ENCODE measurements at regions of chr5 and their contacts with region 1.

Region 1: DNA sequence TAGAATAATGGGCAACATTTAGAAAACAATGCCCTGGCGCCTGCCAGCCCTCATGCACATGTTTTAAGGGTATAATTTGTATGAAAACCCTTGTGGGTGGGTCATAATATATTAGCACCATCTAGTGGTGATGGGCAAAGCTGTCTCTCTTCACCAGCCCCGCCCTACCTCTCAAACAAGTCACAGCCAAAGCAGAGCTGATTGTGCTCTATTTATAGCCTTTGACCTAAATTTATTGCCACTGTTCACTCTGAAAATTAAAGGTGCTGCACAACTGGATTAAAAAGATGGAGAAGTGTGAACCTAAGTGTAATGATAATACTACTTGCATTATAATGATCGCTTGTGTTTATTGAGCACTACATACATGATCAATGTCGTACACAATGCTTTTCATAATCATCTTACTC is 131.9 kb upstream of the ANKH start:
- DNase-seq: peak in 34 of 35 experiments; percentile 13 to 81 (median 46)
- ATAC-seq: peak; percentile 92 to 96 (median 94)
- H3K4me3 ChIP-seq: no peak overlapping the region
- H3K4me3 Mint-ChIP-seq: no peak overlapping the region
- H3K27ac ChIP-seq: no peak overlapping the region
- H3K27ac Mint-ChIP-seq: no peak overlapping the region
- H3K4me1 ChIP-seq: no peaks in the 10 kb centered on the region
- H3K4me1 Mint-ChIP-seq: peaks cover 0 to 4% (median 0%) of the 10 kb centered on the region in 3 donors
- H3K27me3 ChIP-seq: peaks cover 0 to 1% of the 10 kb centered on the region in 2 experiments
- H3K27me3 Mint-ChIP-seq: peaks cover 0 to 5% of the 10 kb centered on the region in 2 donors

Region 2: DNA sequence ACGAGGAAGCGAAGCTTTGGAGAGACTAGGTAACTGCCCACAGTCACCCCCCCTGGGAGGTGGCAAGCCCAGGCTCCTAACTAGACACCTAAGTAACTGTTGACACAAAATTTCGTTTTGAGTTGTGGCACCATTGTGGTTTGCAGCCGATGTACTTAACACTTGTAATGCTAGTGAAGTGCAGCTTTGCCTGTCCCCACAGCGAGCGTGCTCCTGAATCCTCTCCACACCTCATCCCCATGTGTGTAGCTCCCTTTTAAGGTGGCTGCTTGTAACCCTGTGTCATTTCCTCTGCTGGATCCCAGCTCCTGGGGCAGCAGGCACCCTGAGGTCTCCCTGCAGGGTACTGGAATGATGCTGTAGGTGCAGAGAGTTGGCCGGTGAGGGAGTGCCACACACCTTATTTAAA is 745.5 kb before region 1 on chr5:
- CTCF ChIA-PET with region 1: interaction called in 1 of 2 experiments, 14 read pairs
- POLR2A ChIA-PET with region 1: no interaction called
- DNase-seq: no peak
- ATAC-seq: no peak
- H3K4me3 ChIP-seq: no peak overlapping the region
- H3K4me3 Mint-ChIP-seq: no peak overlapping the region
- H3K27ac ChIP-seq: no peak overlapping the region
- H3K27ac Mint-ChIP-seq: no peak overlapping the region
- H3K4me1 ChIP-seq: peaks cover 2 to 5% of the 10 kb centered on the region in 2 experiments
- H3K4me1 Mint-ChIP-seq: no peaks in the 10 kb centered on the region
- H3K27me3 ChIP-seq: peaks cover 0 to 22% of the 10 kb centered on the region in 2 experiments
- H3K27me3 Mint-ChIP-seq: peaks cover 0 to 7% of the 10 kb centered on the region in 2 donors

Region 3: GRCh38 chr5:14727428-14727865 is 276.1 kb before region 1 on chr5:
- CTCF ChIA-PET with region 1: interaction called, 7 to 26 read pairs
- POLR2A ChIA-PET with region 1: no interaction called
- DNase-seq: peak; percentile 22 to 84 (median 65)
- ATAC-seq: peak; percentile 69 to 73 (median 70)
- H3K4me3 ChIP-seq: no peak overlapping the region
- H3K4me3 Mint-ChIP-seq: no peak overlapping the region
- H3K27ac ChIP-seq: peak overlapping the region; percentile 1
- H3K27ac Mint-ChIP-seq: peak overlapping the region; percentile 52 to 59
- H3K4me1 ChIP-seq: no peaks in the 10 kb centered on the region
- H3K4me1 Mint-ChIP-seq: peaks cover 0 to 20% (median 17%) of the 10 kb centered on the region in 3 donors
- H3K27me3 ChIP-seq: no peaks in the 10 kb centered on the region
- H3K27me3 Mint-ChIP-seq: no peaks in the 10 kb centered on the region

Region 4: GRCh38 chr5:14922456-14922855 is 81.1 kb before region 1 on chr5:
- CTCF ChIA-PET with region 1: no interaction called
- POLR2A ChIA-PET with region 1: no interaction called
- DNase-seq: no peak
- ATAC-seq: no peak
- H3K4me3 ChIP-seq: no peak overlapping the region
- H3K4me3 Mint-ChIP-seq: no peak overlapping the region
- H3K27ac ChIP-seq: no peak overlapping the region
- H3K27ac Mint-ChIP-seq: no peak overlapping the region
- H3K4me1 ChIP-seq: peaks cover 13 to 15% of the 10 kb centered on the region in 2 experiments
- H3K4me1 Mint-ChIP-seq: peaks cover 16 to 31% (median 28%) of the 10 kb centered on the region in 3 donors
- H3K27me3 ChIP-seq: no peaks in the 10 kb centered on the region
- H3K27me3 Mint-ChIP-seq: no peaks in the 10 kb centered on the region

Region 5: GRCh38 chr5:14946815-14947640 is 56.5 kb before region 1 on chr5:
- CTCF ChIA-PET with region 1: interaction called, 12 read pairs
- POLR2A ChIA-PET with region 1: no interaction called
- DNase-seq: peak in 29 of 35 experiments; percentile 4 to 76 (median 30)
- ATAC-seq: peak; percentile 87 to 95 (median 93)
- H3K4me3 ChIP-seq: no peak overlapping the region
- H3K4me3 Mint-ChIP-seq: no peak overlapping the region
- H3K27ac ChIP-seq: no peak overlapping the region
- H3K27ac Mint-ChIP-seq: no peak overlapping the region
- H3K4me1 ChIP-seq: no peaks in the 10 kb centered on the region
- H3K4me1 Mint-ChIP-seq: peaks cover 5 to 7% (median 6%) of the 10 kb centered on the region in 3 donors
- H3K27me3 ChIP-seq: no peaks in the 10 kb centered on the region
- H3K27me3 Mint-ChIP-seq: peaks cover 0 to 4% of the 10 kb centered on the region in 2 donors

Region 6: DNA sequence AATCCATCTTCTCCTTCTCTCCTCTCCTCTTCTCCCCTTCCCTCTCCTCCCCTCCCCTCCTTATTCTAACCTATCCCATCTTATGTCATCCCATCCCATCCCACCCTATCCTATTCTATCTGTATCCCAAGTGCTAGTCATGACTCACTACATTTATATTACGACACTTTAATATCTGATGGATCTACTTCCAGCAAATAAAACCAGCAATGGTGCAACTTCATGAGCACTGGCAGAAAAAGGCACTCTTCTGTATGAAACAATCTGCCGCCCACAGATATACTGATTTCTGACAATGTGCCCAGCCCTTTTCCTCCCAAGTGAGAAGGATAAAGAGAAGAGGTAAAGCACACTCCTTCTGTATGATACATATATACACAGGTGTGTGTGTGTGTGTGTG is 45.3 kb before region 1 on chr5:
- CTCF ChIA-PET with region 1: interaction called, 14 to 22 read pairs
- POLR2A ChIA-PET with region 1: no interaction called
- DNase-seq: no peak
- ATAC-seq: no peak
- H3K4me3 ChIP-seq: no peak overlapping the region
- H3K4me3 Mint-ChIP-seq: no peak overlapping the region
- H3K27ac ChIP-seq: no peak overlapping the region
- H3K27ac Mint-ChIP-seq: no peak overlapping the region
- H3K4me1 ChIP-seq: no peaks in the 10 kb centered on the region
- H3K4me1 Mint-ChIP-seq: no peaks in the 10 kb centered on the region
- H3K27me3 ChIP-seq: peaks cover 0 to 4% of the 10 kb centered on the region in 2 experiments
- H3K27me3 Mint-ChIP-seq: peaks cover 3 to 4% of the 10 kb centered on the region in 2 donors

Region 7: DNA sequence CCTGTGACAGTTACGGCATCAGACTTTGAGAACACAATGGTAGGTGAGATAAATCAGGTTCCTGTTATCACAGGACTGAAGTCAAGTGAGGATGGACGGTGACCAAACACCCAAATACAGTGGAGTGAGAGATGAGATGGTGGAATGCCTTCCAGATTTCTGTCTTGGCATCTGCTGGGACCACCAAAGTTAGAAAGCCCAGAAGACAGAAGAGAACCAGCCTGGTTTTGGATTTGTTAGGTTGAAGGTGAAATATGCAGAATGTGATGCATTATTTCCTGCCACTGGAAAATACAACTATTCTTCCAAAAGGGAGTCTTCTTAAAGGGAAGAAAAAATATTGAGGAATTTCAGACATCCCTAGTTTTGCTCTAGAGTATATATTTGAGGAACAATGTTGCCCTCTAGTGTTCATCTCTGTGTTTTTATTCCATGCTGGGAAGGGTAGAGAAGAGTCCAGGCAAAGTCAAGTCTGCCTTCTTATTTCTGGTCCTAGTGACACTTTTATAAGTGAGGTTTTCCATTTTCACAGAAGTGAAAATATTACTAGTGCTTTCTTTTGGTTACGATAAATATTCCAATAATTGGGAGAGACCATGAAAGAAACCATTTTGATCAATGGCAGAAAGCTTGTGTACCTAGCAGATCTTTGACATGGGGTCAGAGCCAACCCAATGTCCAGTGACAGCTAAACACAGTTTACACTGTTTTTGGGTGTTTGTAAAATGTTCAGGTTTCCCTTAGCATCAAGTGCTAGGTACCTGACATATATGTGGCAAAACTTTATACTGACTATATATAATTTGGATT is 10.3 kb after region 1 on chr5:
- CTCF ChIA-PET with region 1: interaction called, 5 to 8 read pairs
- POLR2A ChIA-PET with region 1: interaction called in 1 of 2 experiments, 18 read pairs
- DNase-seq: peak in 1 of 35 experiments; percentile 59
- ATAC-seq: peak in 3 of 4 experiments; percentile 48 to 60 (median 59)
- H3K4me3 ChIP-seq: no peak overlapping the region
- H3K4me3 Mint-ChIP-seq: no peak overlapping the region
- H3K27ac ChIP-seq: no peak overlapping the region
- H3K27ac Mint-ChIP-seq: no peak overlapping the region
- H3K4me1 ChIP-seq: no peaks in the 10 kb centered on the region
- H3K4me1 Mint-ChIP-seq: no peaks in the 10 kb centered on the region
- H3K27me3 ChIP-seq: no peaks in the 10 kb centered on the region
- H3K27me3 Mint-ChIP-seq: peaks cover 0 to 3% of the 10 kb centered on the region in 2 donors

Region 8: GRCh38 chr5:15026011-15026893 is 22.7 kb after region 1 on chr5:
- CTCF ChIA-PET with region 1: no interaction called
- POLR2A ChIA-PET with region 1: no interaction called
- DNase-seq: no peak
- ATAC-seq: no peak
- H3K4me3 ChIP-seq: no peak overlapping the region
- H3K4me3 Mint-ChIP-seq: no peak overlapping the region
- H3K27ac ChIP-seq: no peak overlapping the region
- H3K27ac Mint-ChIP-seq: no peak overlapping the region
- H3K4me1 ChIP-seq: no peaks in the 10 kb centered on the region
- H3K4me1 Mint-ChIP-seq: no peaks in the 10 kb centered on the region
- H3K27me3 ChIP-seq: peaks cover 3 to 8% of the 10 kb centered on the region in 2 experiments
- H3K27me3 Mint-ChIP-seq: peaks cover 35 to 39% of the 10 kb centered on the region in 2 donors

Region 9: DNA sequence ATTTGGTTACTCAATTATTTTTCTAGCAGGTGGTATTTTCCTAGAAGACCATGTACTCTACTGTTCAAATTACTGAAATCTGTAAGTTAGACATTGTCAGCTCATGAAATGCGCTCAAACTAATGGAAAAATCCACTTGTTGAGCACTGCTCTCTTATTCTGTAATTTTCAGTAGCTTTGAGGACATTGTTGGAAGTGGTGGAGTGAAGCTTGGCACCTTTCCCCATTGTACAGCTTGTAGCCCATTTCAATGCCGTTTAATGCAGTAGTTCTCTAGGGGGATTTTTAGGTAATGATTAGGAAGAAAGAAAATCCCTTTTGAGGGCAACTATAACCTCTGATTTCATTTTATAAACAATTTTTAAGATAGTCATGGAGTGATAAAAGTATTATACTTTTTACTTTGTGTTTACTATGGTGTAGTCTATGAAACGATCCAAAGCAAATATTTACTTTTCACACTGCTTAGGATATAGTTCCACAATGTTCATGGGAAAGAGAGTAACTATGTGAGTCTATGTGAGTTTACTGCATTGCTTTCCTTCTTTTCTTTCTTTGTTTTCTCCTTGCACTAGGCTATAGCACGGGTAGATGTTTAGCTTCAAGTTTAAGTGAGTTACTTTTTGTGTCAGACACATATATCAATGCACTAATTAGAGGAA is 33.9 kb after region 1 on chr5:
- CTCF ChIA-PET with region 1: no interaction called
- POLR2A ChIA-PET with region 1: no interaction called
- DNase-seq: no peak
- ATAC-seq: no peak
- H3K4me3 ChIP-seq: no peak overlapping the region
- H3K4me3 Mint-ChIP-seq: no peak overlapping the region
- H3K27ac ChIP-seq: no peak overlapping the region
- H3K27ac Mint-ChIP-seq: no peak overlapping the region
- H3K4me1 ChIP-seq: no peaks in the 10 kb centered on the region
- H3K4me1 Mint-ChIP-seq: no peaks in the 10 kb centered on the region
- H3K27me3 ChIP-seq: peaks cover 0 to 2% of the 10 kb centered on the region in 2 experiments
- H3K27me3 Mint-ChIP-seq: peaks cover 11 to 21% of the 10 kb centered on the region in 2 donors

Region 10: GRCh38 chr5:15160091-15160490 is 156.6 kb after region 1 on chr5:
- CTCF ChIA-PET with region 1: no interaction called
- POLR2A ChIA-PET with region 1: no interaction called
- DNase-seq: no peak
- ATAC-seq: no peak
- H3K4me3 ChIP-seq: no peak overlapping the region
- H3K4me3 Mint-ChIP-seq: no peak overlapping the region
- H3K27ac ChIP-seq: no peak overlapping the region
- H3K27ac Mint-ChIP-seq: no peak overlapping the region
- H3K4me1 ChIP-seq: no peaks in the 10 kb centered on the region
- H3K4me1 Mint-ChIP-seq: no peaks in the 10 kb centered on the region
- H3K27me3 ChIP-seq: no peaks in the 10 kb centered on the region
- H3K27me3 Mint-ChIP-seq: peaks cover 0 to 1% of the 10 kb centered on the region in 2 donors

Measured in T-cell (primary cell).